ENCODE measurements at regions of chr21 and their contacts with region 1.

Region 1: GRCh38 chr21:15729674-15730483 is at the start of gene USP25:
- DNase-seq: peak; percentile 95
- H3K4me3 ChIP-seq: peak within 1 kb of the TSS; percentile 78
- H3K27ac ChIP-seq: peak within 1 kb of the TSS; percentile 93
- H3K4me1 ChIP-seq: peaks cover 4% of the 10 kb centered on the region
- H3K27me3 ChIP-seq: no peaks in the 10 kb centered on the region
- CTCF ChIP-seq: no peak
- total RNA-seq, gene USP25: 30.5 to 46.7 TPM

Region 2: DNA sequence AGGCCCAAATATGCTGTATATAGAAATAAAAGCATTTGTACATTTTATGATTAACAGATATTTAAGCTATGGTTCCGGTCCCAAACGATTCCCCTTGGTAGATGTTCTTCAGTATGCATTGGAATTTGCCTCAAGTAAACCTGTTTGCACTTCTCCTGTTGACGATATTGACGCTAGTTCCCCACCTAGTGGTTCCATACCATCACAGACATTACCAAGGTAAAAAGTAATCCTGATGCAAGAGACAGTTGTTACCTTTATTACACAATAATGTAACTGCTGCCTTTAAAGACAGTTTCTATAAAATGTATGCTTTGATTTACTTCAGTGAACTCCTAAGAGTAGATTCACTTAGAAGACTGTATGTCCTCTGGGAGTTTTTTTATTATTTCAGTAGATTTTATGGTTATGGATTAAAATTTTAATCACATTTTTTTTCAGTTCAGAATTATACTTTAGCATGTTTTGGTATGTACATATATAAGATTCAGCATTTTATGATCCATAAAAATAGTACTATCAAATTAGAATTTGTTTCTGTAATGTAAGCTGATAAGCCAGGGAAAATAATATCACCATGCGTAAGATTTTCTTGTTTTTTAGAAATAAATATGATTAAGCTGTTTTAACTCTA is 96.4 kb after region 1 on chr21:
- intact Hi-C with region 1: loop called (anchors 10 kb)
- DNase-seq: peak; percentile 57
- H3K4me3 ChIP-seq: no peak overlapping the region
- H3K27ac ChIP-seq: no peak overlapping the region
- H3K4me1 ChIP-seq: no peaks in the 10 kb centered on the region
- H3K27me3 ChIP-seq: no peaks in the 10 kb centered on the region
- CTCF ChIP-seq: peak; percentile 39

Measured in colonic mucosa (tissue), 4 donors.